ENCODE measurements at regions of chr12 and their contacts with region 1.

Region 1: GRCh38 chr12:92145731-92146496 is at the start of gene BTG1:
- DNase-seq: peak; percentile 100
- ATAC-seq: peak; percentile 93 to 94
- H3K4me3 ChIP-seq: peak within 1 kb of the TSS; percentile 89 to 98 (median 94)
- H3K27ac ChIP-seq: peak within 1 kb of the TSS; percentile 97 to 99 (median 98)
- H3K4me1 ChIP-seq: peaks cover 24 to 28% of the 10 kb centered on the region in 2 donors
- H3K27me3 ChIP-seq: no peaks in the 10 kb centered on the region
- CTCF ChIP-seq: peak in 1 of 5 experiments; percentile 16
- POLR2A ChIP-seq: peak; percentile 98 to 99
- total RNA-seq, gene BTG1: 12.5 to 33.1 (median 16.5) TPM

Region 2: GRCh38 chr12:91382081-91382543 is 763.8 kb before region 1 on chr12:
- in situ Hi-C with region 1: loop called in 1 of 4 experiments (anchors 25 kb)
- intact Hi-C with region 1: loop called (anchors 5 kb)
- DNase-seq: peak; percentile 43 to 51
- ATAC-seq: peak; percentile 78 to 83
- H3K4me3 ChIP-seq: peak overlapping the region; percentile 43 to 55 (median 52)
- H3K27ac ChIP-seq: peak overlapping the region; percentile 25 to 62 (median 46)
- H3K4me1 ChIP-seq: peaks cover 4 to 6% of the 10 kb centered on the region in 2 donors
- H3K27me3 ChIP-seq: no peaks in the 10 kb centered on the region
- CTCF ChIP-seq: peak; percentile 72 to 91 (median 80)
- POLR2A ChIP-seq: no peak

Region 3: GRCh38 chr12:91811481-91812287 is 334.2 kb before region 1 on chr12:
- in situ Hi-C with region 1: loop called in 1 of 4 experiments (anchors 25 kb)
- intact Hi-C with region 1: loop called (anchors 5 kb)
- DNase-seq: peak; percentile 19 to 27
- ATAC-seq: peak; percentile 50 to 60
- H3K4me3 ChIP-seq: no peak overlapping the region
- H3K27ac ChIP-seq: no peak overlapping the region
- H3K4me1 ChIP-seq: no peaks in the 10 kb centered on the region
- H3K27me3 ChIP-seq: no peaks in the 10 kb centered on the region
- CTCF ChIP-seq: peak; percentile 61 to 75 (median 68)
- POLR2A ChIP-seq: no peak

Region 4: GRCh38 chr12:92078167-92079053 is 67.5 kb before region 1 on chr12:
- in situ Hi-C with region 1: no loop called
- intact Hi-C with region 1: loop called (anchors 5 kb)
- DNase-seq: peak in 1 of 2 donors; percentile 50
- ATAC-seq: peak; percentile 72 to 80
- H3K4me3 ChIP-seq: no peak overlapping the region
- H3K27ac ChIP-seq: peak overlapping the region in 3 of 4 donors; percentile 4 to 59 (median 24)
- H3K4me1 ChIP-seq: peaks cover 4 to 18% of the 10 kb centered on the region in 2 donors
- H3K27me3 ChIP-seq: no peaks in the 10 kb centered on the region
- CTCF ChIP-seq: no peak
- POLR2A ChIP-seq: no peak

Region 5: GRCh38 chr12:92244036-92244435 is 98.1 kb after region 1 on chr12:
- in situ Hi-C with region 1: no loop called
- intact Hi-C with region 1: loop called (anchors 1 kb)
- DNase-seq: peak; percentile 28 to 55
- ATAC-seq: peak; percentile 94 to 95
- H3K4me3 ChIP-seq: peak overlapping the region in 2 of 4 donors; percentile 10 to 16
- H3K27ac ChIP-seq: peak overlapping the region; percentile 64 to 82 (median 72)
- H3K4me1 ChIP-seq: peaks cover 11 to 21% of the 10 kb centered on the region in 2 donors
- H3K27me3 ChIP-seq: no peaks in the 10 kb centered on the region
- CTCF ChIP-seq: peak in 1 of 5 experiments; percentile 23
- POLR2A ChIP-seq: no peak

Region 6: GRCh38 chr12:92259852-92260251 is 113.9 kb after region 1 on chr12:
- in situ Hi-C with region 1: no loop called
- intact Hi-C with region 1: no loop called
- DNase-seq: no peak
- ATAC-seq: no peak
- H3K4me3 ChIP-seq: no peak overlapping the region
- H3K27ac ChIP-seq: no peak overlapping the region
- H3K4me1 ChIP-seq: no peaks in the 10 kb centered on the region
- H3K27me3 ChIP-seq: no peaks in the 10 kb centered on the region
- CTCF ChIP-seq: no peak
- POLR2A ChIP-seq: no peak

Region 7: DNA sequence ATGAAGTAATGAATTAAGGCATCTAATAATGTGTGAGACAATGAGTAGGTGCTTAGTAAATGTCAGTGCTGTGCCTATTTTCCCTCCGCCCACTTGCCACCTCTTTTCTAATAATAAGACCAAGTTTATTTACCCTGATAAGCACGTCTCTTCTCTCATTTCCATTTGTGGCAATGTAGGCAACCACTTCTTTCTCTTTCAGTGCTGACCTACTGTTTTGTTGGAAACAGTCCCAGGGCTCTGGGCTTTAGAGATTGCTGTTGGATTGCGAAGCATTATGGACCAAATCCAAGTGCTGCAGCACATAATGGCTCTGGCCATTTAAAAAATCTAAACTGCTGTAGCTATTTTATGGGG is 415.6 kb after region 1 on chr12:
- in situ Hi-C with region 1: loop called in 3 of 4 experiments (anchors 10 to 25 kb)
- intact Hi-C with region 1: no loop called
- DNase-seq: peak; percentile 41 to 50
- ATAC-seq: peak; percentile 92 to 94
- H3K4me3 ChIP-seq: no peak overlapping the region
- H3K27ac ChIP-seq: peak overlapping the region; percentile 33 to 66 (median 57)
- H3K4me1 ChIP-seq: peaks cover 8 to 14% of the 10 kb centered on the region in 2 donors
- H3K27me3 ChIP-seq: no peaks in the 10 kb centered on the region
- CTCF ChIP-seq: no peak
- POLR2A ChIP-seq: no peak

Measured in gastrocnemius medialis (tissue), 4 donors.